GM12878 (cell line): ENCODE measurements at regions of chr1 and their contacts with region 1.

Region 1: GRCh38 chr1:117051224-117052064 is 8.7 kb upstream of the TTF2 start:
- DNase-seq: peak; percentile 34
- ATAC-seq: peak; percentile 93
- H3K4me3 ChIP-seq: peak overlapping the region; percentile 61; the same call in 1 of the 2 replicates
- H3K27ac ChIP-seq: peak overlapping the region; percentile 89
- H3K4me1 ChIP-seq: peaks cover 13% of the 10 kb centered on the region
- H3K27me3 ChIP-seq: no peaks in the 10 kb centered on the region
- CTCF ChIP-seq: no peak
- EP300 ChIP-seq: no peak; a peak in 1 of 4 replicates
- POLR2A ChIP-seq: peak; percentile 55
- RAD21 ChIP-seq: peak; percentile 2; the same call in 1 of the 2 replicates

Region 2: GRCh38 chr1:116853670-116854402 is 197.6 kb before region 1 on chr1:
- CTCF ChIA-PET with region 1: interaction called, 15 read pairs
- POLR2A ChIA-PET with region 1: no interaction called
- RAD21 ChIA-PET with region 1: interaction called, 9 read pairs
- SMC1A ChIA-PET with region 1: interaction called, 24 read pairs
- in situ Hi-C with region 1: no loop called
- intact Hi-C with region 1: no loop called
- DNase-seq: no peak
- ATAC-seq: peak; percentile 81
- H3K4me3 ChIP-seq: no peak overlapping the region
- H3K27ac ChIP-seq: no peak overlapping the region
- H3K4me1 ChIP-seq: 0 out of 2 replicates have a peak, but pooled peaks cover 3% of the 10 kb centered on the region
- H3K27me3 ChIP-seq: no peaks in the 10 kb centered on the region
- CTCF ChIP-seq: no peak
- EP300 ChIP-seq: no peak
- POLR2A ChIP-seq: no peak
- RAD21 ChIP-seq: no peak

Region 3: GRCh38 chr1:117001254-117001927 is 50.1 kb before region 1 on chr1 and contains the start of gene CD101:
- CTCF ChIA-PET with region 1: interaction called, 9 read pairs
- POLR2A ChIA-PET with region 1: interaction called, 9 read pairs
- RAD21 ChIA-PET with region 1: interaction called, 12 read pairs
- SMC1A ChIA-PET with region 1: interaction called, 11 read pairs
- in situ Hi-C with region 1: no loop called
- intact Hi-C with region 1: loop called (anchors 2 kb)
- DNase-seq: peak; percentile 82
- ATAC-seq: peak; percentile 95
- H3K4me3 ChIP-seq: peak within 1 kb of the TSS; percentile 6; the same call in 1 of the 2 replicates
- H3K27ac ChIP-seq: peak within 1 kb of the TSS; percentile 49
- H3K4me1 ChIP-seq: peaks cover 20% of the 10 kb centered on the region
- H3K27me3 ChIP-seq: no peaks in the 10 kb centered on the region
- CTCF ChIP-seq: no peak
- EP300 ChIP-seq: peak; percentile 66 to 85
- POLR2A ChIP-seq: no peak
- RAD21 ChIP-seq: peak; percentile 36; the same call in 1 of the 2 replicates
- polyA plus RNA-seq, gene CD101: 1.9 to 2.7 TPM

Region 4: GRCh38 chr1:117017648-117018047 is 33.8 kb before region 1 on chr1:
- CTCF ChIA-PET with region 1: interaction called, 4 read pairs
- POLR2A ChIA-PET with region 1: no interaction called
- RAD21 ChIA-PET with region 1: interaction called, 3 read pairs
- SMC1A ChIA-PET with region 1: interaction called, 4 read pairs
- in situ Hi-C with region 1: no loop called
- intact Hi-C with region 1: loop called (anchors 1 kb)
- DNase-seq: no peak
- ATAC-seq: peak; percentile 69
- H3K4me3 ChIP-seq: no peak overlapping the region
- H3K27ac ChIP-seq: no peak overlapping the region
- H3K4me1 ChIP-seq: peaks cover 5% of the 10 kb centered on the region; the same call in 1 of the 2 replicates
- H3K27me3 ChIP-seq: no peaks in the 10 kb centered on the region
- CTCF ChIP-seq: no peak
- EP300 ChIP-seq: no peak
- POLR2A ChIP-seq: no peak
- RAD21 ChIP-seq: no peak

Region 5: DNA sequence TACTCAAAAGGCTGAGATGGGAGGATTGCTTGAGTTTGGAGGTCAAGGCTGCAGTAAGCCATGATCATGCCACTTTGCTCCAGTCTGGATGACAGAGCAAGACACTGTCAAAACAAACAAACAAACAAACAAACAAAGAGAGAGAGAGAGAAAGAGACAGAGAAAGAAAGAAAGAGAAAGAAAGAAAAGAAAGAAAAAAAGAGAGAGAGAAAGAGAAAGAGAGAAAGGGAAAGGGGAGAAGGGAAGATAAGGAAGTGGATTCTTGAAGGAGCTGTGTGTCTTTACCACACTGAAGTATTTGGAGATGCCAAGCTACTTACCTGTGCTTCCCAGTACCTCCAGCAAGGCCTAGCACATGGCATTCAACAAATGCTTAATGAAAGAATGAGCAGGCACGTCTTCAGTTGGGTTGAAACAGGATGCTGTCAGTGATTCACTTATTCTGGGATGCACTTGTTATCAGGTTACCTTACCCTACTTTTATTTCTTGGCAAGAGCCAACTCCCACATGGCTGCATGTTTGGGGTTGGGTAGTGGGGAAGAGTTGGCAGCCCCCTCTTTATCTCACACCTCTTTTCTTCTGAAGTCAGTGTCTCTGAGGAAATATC is 21.1 kb before region 1 on chr1:
- CTCF ChIA-PET with region 1: no interaction called
- POLR2A ChIA-PET with region 1: no interaction called
- RAD21 ChIA-PET with region 1: no interaction called
- SMC1A ChIA-PET with region 1: interaction called, 4 read pairs
- in situ Hi-C with region 1: no loop called
- intact Hi-C with region 1: loop called (anchors 2 kb)
- DNase-seq: no peak
- ATAC-seq: no peak
- H3K4me3 ChIP-seq: no peak overlapping the region
- H3K27ac ChIP-seq: no peak overlapping the region
- H3K4me1 ChIP-seq: no peaks in the 10 kb centered on the region
- H3K27me3 ChIP-seq: no peaks in the 10 kb centered on the region
- CTCF ChIP-seq: no peak
- EP300 ChIP-seq: no peak
- POLR2A ChIP-seq: no peak
- RAD21 ChIP-seq: no peak